ENCODE measurements at regions of chr12 and their contacts with region 1.

Region 1: DNA sequence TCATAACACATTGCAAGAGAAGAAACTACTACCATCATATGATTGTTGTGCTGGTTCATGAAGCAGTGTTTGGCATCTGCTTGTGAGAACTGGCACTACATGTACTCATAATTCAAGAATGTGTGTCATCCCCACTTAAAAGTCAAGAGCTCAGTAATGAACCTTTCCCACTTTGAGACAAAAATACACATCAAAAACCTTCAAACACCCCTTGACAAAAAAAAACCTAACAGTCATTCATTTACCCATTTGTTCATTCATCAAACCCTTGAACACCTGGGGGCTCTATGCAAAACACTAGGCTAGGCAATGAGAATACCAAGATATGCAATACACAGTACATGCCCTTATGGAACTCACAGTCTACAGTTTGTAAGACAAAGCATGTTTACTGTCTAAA is 40.0 kb downstream of the KIF21A start:
- DNase-seq: peak; percentile 18
- H3K4me3 Mint-ChIP-seq: no peak overlapping the region
- H3K27ac Mint-ChIP-seq: no peak overlapping the region
- H3K4me1 Mint-ChIP-seq: peaks cover 15% of the 10 kb centered on the region
- H3K27me3 Mint-ChIP-seq: no peaks in the 10 kb centered on the region

Region 2: GRCh38 chr12:39375206-39375808 is 27.6 kb before region 1 on chr12:
- CTCF ChIA-PET with region 1: no interaction called
- intact Hi-C with region 1: no loop called
- DNase-seq: no peak
- H3K4me3 Mint-ChIP-seq: no peak overlapping the region
- H3K27ac Mint-ChIP-seq: no peak overlapping the region
- H3K4me1 Mint-ChIP-seq: peaks cover 7% of the 10 kb centered on the region
- H3K27me3 Mint-ChIP-seq: no peaks in the 10 kb centered on the region

Region 3: DNA sequence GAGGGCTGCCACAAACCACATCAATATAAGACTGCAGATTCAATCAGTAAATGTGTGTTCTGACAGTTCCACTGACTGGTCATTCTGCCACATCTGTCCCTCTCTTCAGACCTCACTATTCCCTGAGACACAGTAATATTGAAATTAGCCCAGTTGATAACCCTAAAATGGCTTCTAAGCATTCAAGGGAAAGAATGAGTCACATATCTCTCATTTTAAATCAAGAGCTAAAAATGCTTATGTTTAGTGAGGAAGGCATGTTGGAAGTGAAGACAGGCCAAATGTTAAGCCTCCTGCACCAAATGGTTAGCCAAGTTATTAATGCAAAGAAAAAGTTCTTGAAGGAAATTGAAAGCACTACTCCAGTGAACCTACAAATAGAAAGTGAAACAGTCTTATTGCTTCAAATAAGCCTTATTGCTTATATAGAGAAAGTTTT is 64.5 kb after region 1 on chr12:
- CTCF ChIA-PET with region 1: no interaction called
- intact Hi-C with region 1: loop called (anchors 1 kb)
- DNase-seq: peak; percentile 32
- H3K4me3 Mint-ChIP-seq: no peak overlapping the region
- H3K27ac Mint-ChIP-seq: peak overlapping the region; percentile 46
- H3K4me1 Mint-ChIP-seq: peaks cover 18% of the 10 kb centered on the region
- H3K27me3 Mint-ChIP-seq: no peaks in the 10 kb centered on the region

Region 4: GRCh38 chr12:39628836-39629235 is 225.9 kb after region 1 on chr12:
- CTCF ChIA-PET with region 1: interaction called, 5 read pairs
- intact Hi-C with region 1: loop called (anchors 2 kb)
- DNase-seq: no peak
- H3K4me3 Mint-ChIP-seq: peak overlapping the region; percentile 44
- H3K27ac Mint-ChIP-seq: peak overlapping the region; percentile 93
- H3K4me1 Mint-ChIP-seq: peaks cover 54% of the 10 kb centered on the region
- H3K27me3 Mint-ChIP-seq: no peaks in the 10 kb centered on the region

Measured in activated naive CD4-positive, alpha-beta T cell treated with anti-CD3 and anti-CD28 coated beads for 36 hours (primary cell).